OCI-LY7 (cell line): ENCODE measurements at regions of chr1 and their contacts with region 1.

Region 1: DNA sequence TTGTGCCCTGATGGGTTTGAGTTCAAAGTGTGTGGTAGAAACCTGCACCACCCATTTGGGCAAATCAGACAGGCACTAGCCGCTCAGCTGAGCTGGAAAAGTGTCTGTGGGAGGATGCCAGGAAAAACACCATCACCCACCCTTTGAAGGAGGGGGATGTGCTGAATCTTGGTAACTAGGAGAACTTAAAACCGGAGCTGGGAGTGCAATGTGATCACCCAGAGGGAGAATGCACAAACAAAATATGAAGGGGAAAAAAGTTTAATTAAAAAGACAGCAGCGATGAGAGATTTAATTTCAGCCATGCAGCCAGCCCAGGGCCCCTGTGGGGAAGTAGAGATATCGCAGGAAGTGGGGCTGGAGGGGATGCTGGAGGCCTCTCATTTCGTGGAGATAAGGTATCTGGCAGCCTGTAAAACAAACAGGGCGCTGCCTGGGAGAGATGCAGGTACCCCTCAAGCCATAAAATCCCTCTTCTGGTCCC is 86.8 kb upstream of the BCAR3 start:
- DNase-seq: no peak
- H3K4me3 ChIP-seq: no peak overlapping the region
- H3K27ac ChIP-seq: no peak overlapping the region
- H3K4me1 ChIP-seq: no peaks in the 10 kb centered on the region
- CTCF ChIP-seq: no peak

Region 2: DNA sequence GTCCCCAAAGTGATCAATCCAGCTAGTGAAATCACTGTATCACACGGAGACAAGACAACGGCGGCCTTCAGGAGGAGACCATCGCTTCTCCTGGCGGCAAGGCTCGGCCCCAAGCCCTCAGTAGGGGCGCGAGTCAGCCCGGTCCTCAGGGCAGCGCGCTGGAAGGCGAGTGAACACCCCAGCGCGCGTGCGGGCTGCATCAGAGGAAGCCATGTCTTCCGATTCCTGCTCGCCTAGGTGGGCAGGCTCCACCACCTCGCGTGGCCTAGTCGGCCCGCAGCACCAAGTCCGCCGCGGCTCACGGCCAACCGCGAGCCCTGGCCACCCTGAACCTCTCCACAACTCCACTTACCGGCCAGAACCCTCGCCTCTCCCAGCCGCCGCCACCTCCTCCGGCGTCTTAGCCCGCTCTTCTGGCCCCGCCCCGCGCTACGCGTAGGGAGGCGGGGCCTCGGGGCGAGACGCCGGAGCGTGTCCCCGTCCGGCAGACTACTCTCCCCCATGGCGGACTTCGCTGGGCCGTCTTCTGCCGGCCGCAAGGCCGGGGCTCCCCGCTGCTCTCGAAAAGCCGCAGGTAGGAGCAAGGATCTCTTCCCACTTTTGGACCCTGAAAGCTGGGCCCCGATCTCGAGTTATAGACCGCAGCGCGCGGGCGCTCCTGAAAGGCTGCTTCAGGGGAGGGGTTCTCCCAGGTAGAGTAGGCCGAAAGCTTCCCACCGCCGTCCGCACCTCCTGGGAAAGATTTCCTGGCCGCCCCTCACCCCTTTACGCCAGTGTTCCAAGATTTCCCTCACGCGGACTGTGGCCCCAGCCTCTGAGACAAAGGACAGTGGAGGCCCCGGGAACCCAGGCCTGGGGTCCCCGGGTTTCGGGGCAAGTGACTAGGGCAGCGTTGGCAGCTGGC is 1469.6 kb before region 1 on chr1 and contains the starts of genes GLMN and RPAP2:
- CTCF ChIA-PET with region 1: no interaction called
- POLR2A ChIA-PET with region 1: no interaction called
- intact Hi-C with region 1: loop called (anchors 10 kb)
- DNase-seq: peak; percentile 89
- H3K4me3 ChIP-seq: peak within 1 kb of the TSS; percentile 88
- H3K27ac ChIP-seq: peak within 1 kb of the TSS; percentile 56
- H3K4me1 ChIP-seq: peaks cover 18% of the 10 kb centered on the region
- CTCF ChIP-seq: 0 out of 2 replicates have a peak, but pooled peaks have one; percentile 3
- total RNA-seq, gene GLMN: 12.4 and 12.6 TPM in 2 replicates
- total RNA-seq, gene RPAP2: 2.2 and 8.6 TPM in 2 replicates

Region 3: DNA sequence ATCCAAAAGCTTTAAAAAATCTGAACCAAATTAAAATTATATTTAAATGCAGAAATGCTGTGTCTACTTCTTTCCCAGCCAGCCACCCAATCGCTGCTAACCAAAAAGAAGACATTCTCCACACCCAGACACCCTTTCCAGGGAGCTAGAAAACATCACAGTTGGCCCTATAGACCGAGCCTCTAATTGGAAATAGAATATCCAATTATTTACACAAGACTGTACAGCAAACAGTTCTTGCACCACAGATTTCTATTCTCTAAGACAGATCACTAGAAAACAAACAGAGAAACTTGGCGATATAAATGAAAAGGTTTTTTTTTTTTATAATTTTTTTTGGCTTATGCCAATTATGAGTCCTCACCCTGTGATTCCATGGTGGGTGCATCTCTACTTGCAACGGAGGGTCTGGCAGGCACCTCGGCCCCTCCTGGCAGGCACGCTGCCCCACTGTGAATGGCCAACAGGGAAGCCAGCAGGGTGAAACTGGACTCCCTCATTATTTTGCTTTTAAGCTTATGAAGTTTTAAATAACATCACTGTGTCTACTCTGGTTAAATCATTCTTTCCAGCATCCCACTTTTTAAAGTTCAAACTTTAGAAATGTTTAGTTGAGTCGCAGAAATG is 116.0 kb before region 1 on chr1:
- CTCF ChIA-PET with region 1: no interaction called
- POLR2A ChIA-PET with region 1: no interaction called
- intact Hi-C with region 1: no loop called
- DNase-seq: no peak
- H3K4me3 ChIP-seq: no peak overlapping the region
- H3K27ac ChIP-seq: no peak overlapping the region
- H3K4me1 ChIP-seq: no peaks in the 10 kb centered on the region
- CTCF ChIP-seq: no peak

Region 4: DNA sequence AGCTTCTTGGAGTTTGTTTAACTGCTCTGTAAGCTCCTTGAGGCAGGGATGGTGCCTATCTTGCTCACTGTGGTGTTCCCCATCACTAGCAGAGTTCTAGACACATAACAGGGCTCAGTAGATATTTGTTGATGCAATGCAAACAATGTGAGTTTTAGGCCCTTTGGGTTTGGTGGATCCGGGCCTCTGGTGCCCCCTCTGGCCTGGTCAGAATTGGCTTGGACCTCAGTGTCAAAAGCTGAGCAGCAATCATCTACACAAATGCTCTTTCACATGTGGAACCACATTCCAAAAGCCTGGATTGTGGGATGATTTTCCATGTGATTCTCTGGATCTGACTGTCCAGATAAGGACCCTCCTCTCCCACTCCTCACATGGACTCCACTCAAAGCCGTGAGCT is 33.4 kb before region 1 on chr1:
- CTCF ChIA-PET with region 1: no interaction called
- POLR2A ChIA-PET with region 1: no interaction called
- intact Hi-C with region 1: no loop called
- DNase-seq: peak; percentile 45
- H3K4me3 ChIP-seq: no peak overlapping the region
- H3K27ac ChIP-seq: no peak overlapping the region
- H3K4me1 ChIP-seq: peaks cover 34% of the 10 kb centered on the region
- CTCF ChIP-seq: peak; percentile 76

Region 5: GRCh38 chr1:93784538-93784937 is 16.1 kb after region 1 on chr1:
- CTCF ChIA-PET with region 1: no interaction called
- POLR2A ChIA-PET with region 1: no interaction called
- intact Hi-C with region 1: no loop called
- DNase-seq: no peak
- H3K4me3 ChIP-seq: no peak overlapping the region
- H3K27ac ChIP-seq: no peak overlapping the region
- H3K4me1 ChIP-seq: no peaks in the 10 kb centered on the region
- CTCF ChIP-seq: no peak

Region 6: GRCh38 chr1:93804412-93804811 is 36.0 kb after region 1 on chr1:
- CTCF ChIA-PET with region 1: no interaction called
- POLR2A ChIA-PET with region 1: no interaction called
- intact Hi-C with region 1: loop called (anchors 5 kb)
- DNase-seq: no peak
- H3K4me3 ChIP-seq: no peak overlapping the region
- H3K27ac ChIP-seq: no peak overlapping the region
- H3K4me1 ChIP-seq: no peaks in the 10 kb centered on the region
- CTCF ChIP-seq: no peak